Endothelial cell of umbilical vein (primary cell): ENCODE measurements at regions of chr19 and their contacts with region 1.

Region 1: DNA sequence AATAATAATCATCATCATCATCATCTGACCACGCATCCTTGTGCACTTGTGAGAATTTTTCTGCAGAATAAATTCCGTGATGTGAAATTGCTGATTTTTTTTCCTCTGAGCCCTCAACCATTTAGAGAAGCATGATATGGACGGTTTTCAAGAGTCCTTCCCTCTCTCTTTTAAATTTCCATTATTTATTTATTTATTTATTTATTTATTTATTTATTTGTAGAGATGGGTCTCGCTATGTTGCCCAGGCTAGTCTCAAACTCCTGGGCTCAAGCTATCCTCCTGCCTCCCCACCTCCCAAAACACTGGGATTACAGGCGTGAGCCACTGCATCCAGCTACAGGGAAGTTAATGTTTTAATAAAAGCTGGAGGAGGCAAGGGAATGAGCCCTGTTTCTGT is 39.6 kb downstream of the CACNA1A start:
- DNase-seq: no peak
- H3K4me3 ChIP-seq: no peak overlapping the region
- H3K27ac ChIP-seq: no peak overlapping the region
- H3K4me1 ChIP-seq: no peaks in the 10 kb centered on the region
- H3K27me3 ChIP-seq: no peaks in the 10 kb centered on the region
- CTCF ChIP-seq: no peak
- POLR2A ChIP-seq: no peak

Region 2: DNA sequence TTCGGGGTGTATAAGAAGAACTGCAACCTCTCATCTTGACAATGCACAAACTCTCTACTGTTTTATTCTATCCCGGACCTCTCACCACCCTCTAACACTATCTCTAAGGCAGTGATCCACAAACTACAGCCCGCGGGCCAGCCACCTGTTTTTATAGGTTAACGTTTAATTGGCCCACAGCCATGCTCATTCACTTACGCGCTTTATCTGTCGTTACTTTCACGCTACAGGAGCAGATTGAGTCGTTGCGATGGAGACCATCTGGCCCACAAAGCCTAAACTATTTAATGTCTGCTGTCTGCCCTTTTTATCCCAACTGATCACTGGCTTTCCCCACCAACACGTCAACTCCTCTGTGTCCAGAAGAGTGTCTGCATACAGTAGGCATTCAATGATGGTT is 119.3 kb before region 1 on chr19:
- CTCF ChIA-PET with region 1: no interaction called
- POLR2A ChIA-PET with region 1: no interaction called
- dilution Hi-C with region 1: no loop called
- intact Hi-C with region 1: no loop called
- DNase-seq: no peak
- H3K4me3 ChIP-seq: no peak overlapping the region
- H3K27ac ChIP-seq: no peak overlapping the region
- H3K4me1 ChIP-seq: no peaks in the 10 kb centered on the region
- H3K27me3 ChIP-seq: no peaks in the 10 kb centered on the region
- CTCF ChIP-seq: no peak
- POLR2A ChIP-seq: no peak

Region 3: DNA sequence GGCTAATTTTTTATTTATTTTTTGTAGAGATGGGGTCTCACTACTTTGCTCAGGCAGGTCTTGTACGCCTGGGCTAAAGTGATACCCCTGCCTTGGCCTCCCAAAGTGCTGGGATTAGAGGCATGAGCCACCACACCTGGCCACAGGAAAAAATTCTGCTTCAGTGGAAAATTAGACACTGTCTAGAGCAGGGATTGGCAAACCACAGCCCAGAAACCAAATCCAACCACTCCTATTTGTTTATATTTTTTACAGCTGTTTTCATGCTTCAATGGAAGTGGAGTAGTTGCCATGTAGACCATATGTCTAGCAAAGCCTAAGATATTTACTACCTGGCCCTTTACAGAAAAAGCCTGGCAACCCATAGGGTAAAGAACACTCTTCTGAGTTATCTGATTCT is 173.9 kb after region 1 on chr19:
- CTCF ChIA-PET with region 1: no interaction called
- POLR2A ChIA-PET with region 1: interaction called, 12 read pairs
- dilution Hi-C with region 1: no loop called
- intact Hi-C with region 1: no loop called
- DNase-seq: no peak
- H3K4me3 ChIP-seq: no peak overlapping the region
- H3K27ac ChIP-seq: no peak overlapping the region
- H3K4me1 ChIP-seq: no peaks in the 10 kb centered on the region
- H3K27me3 ChIP-seq: no peaks in the 10 kb centered on the region
- CTCF ChIP-seq: no peak
- POLR2A ChIP-seq: no peak